Heart right ventricle (tissue), 16 donors: ENCODE measurements at regions of chr10 and their contacts with region 1.

Region 1: DNA sequence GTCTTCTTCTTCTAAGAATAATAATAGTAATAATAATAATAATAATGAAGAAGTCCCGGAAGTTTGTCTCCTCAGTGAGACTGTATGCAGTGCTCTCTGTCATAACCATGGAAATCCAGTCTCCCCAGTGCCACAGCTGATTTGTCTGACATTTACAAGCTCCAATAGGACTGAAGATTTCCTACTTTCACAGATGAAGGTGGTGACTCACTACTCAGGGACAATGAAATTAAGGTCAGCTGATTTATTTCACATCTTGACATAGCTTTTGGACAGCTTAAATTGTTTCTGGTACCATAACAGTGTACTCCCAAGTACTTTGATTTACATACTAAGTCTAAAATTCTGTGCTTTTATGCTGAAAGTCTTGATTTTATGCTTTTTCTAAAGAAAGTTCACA is 6.9 kb downstream of the CELF2 start:
- DNase-seq: no peak
- ATAC-seq: peak in 6 of 8 donors; percentile 10 to 91 (median 52)
- H3K4me3 ChIP-seq: no peak overlapping the region
- H3K27ac ChIP-seq: peak overlapping the region in 2 of 10 donors; percentile 41 to 92
- H3K4me1 ChIP-seq: peaks cover 9 to 75% (median 54%) of the 10 kb centered on the region in 9 donors
- H3K27me3 ChIP-seq: peaks cover 0 to 26% (median 0%) of the 10 kb centered on the region in 7 donors
- CTCF ChIP-seq: no peak

Region 2: GRCh38 chr10:10584161-10584560 is 440.4 kb before region 1 on chr10:
- intact Hi-C with region 1: loop called in 1 of 10 experiments (anchors 5 kb)
- DNase-seq: no peak
- ATAC-seq: no peak
- H3K4me3 ChIP-seq: no peak overlapping the region
- H3K27ac ChIP-seq: no peak overlapping the region
- H3K4me1 ChIP-seq: peaks cover 0 to 20% (median 0%) of the 10 kb centered on the region in 9 donors
- H3K27me3 ChIP-seq: no peaks in the 10 kb centered on the region
- CTCF ChIP-seq: no peak

Region 3: DNA sequence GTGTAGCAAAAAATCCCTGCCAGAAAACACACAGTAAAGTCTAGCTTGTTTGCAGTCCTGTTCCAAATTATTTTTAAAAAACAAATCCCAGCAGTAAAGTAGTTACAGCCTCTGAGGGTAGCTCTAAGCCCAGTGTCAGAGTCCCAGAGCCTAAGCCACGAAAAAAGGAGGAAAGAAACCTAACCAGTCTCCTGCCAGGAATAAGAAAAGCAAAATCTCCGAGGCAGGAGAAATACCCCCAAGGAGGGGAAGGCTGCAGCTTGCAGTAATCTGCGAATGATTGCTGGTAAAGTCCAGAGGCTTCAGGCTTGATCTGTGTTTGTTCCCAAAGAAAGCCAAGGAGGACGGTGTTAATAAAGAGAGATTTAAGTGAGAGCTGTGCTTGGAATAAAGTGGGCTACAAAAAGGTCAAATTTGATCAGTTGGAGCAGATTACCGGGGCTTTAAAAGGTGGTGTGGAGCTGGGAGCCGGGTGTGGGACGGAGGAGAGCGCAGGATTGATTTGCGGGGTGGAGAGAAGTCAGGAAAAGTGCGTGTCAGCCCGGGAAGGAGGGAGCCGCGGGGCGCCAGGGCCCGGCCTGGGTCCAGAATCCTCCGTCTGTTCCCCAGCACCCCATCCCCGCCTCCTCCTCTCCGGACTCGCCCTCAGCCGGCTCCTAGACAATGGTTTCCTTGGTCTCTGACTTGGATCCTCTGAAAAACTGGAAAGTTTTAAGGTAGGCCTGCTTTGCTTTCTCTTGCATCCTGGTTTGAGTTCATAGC is 226.3 kb before region 1 on chr10:
- intact Hi-C with region 1: loop called in 3 of 10 experiments (anchors 5 kb)
- DNase-seq: peak in 1 of 2 donors; percentile 25
- ATAC-seq: peak; percentile 29 to 70 (median 68)
- H3K4me3 ChIP-seq: peak overlapping the region in 9 of 10 donors; percentile 15 to 48 (median 32)
- H3K27ac ChIP-seq: peak overlapping the region; percentile 69 to 93 (median 84)
- H3K4me1 ChIP-seq: peaks cover 0 to 69% (median 32%) of the 10 kb centered on the region in 9 donors
- H3K27me3 ChIP-seq: no peaks in the 10 kb centered on the region
- CTCF ChIP-seq: peak in 2 of 9 donors; percentile 11 to 21

Region 4: DNA sequence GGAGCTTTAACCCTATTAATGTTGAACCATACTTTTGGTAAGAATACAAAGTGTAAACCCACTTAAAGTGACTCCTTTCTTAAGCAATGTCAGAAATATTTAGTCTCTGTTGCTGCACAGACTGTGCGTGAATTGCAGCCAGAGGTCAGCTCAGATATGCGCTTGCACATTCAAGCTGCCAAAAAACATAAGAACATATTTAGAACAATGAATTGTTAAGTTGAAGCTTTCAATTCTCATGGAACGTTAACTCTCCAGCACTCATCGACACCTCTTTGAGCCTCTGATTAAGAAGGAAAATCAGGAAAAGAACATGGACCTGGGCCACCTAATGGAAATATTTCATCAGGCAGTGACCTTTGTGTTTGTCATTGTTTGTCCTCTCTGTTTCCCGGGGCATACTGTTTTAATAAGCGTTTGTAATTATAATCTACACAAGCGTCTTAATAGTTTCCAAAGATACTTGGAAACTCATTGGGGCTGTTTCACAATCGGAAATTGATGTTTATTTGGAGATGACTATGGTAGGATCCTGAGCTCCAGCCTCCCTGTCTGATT is 199.9 kb before region 1 on chr10:
- intact Hi-C with region 1: loop called in 2 of 10 experiments (anchors 10 kb)
- DNase-seq: peak; percentile 26 to 45
- ATAC-seq: peak; percentile 68 to 93 (median 86)
- H3K4me3 ChIP-seq: peak overlapping the region in 2 of 10 donors; percentile 2 to 25
- H3K27ac ChIP-seq: peak overlapping the region; percentile 44 to 87 (median 78)
- H3K4me1 ChIP-seq: peaks cover 7 to 55% (median 32%) of the 10 kb centered on the region in 9 donors
- H3K27me3 ChIP-seq: no peaks in the 10 kb centered on the region
- CTCF ChIP-seq: peak in 3 of 9 donors; percentile 33 to 43 (median 39)

Region 5: GRCh38 chr10:10930979-10931743 is 93.4 kb before region 1 on chr10:
- intact Hi-C with region 1: no loop called
- DNase-seq: no peak
- ATAC-seq: no peak
- H3K4me3 ChIP-seq: no peak overlapping the region
- H3K27ac ChIP-seq: no peak overlapping the region
- H3K4me1 ChIP-seq: no peaks in the 10 kb centered on the region
- H3K27me3 ChIP-seq: no peaks in the 10 kb centered on the region
- CTCF ChIP-seq: peak in 5 of 9 donors; percentile 9 to 43 (median 33)

Region 6: GRCh38 chr10:11270135-11270857 is 245.7 kb after region 1 on chr10:
- intact Hi-C with region 1: loop called in 3 of 10 experiments (anchors 10 kb)
- DNase-seq: peak; percentile 83 to 84
- ATAC-seq: peak; percentile 92 to 98 (median 96)
- H3K4me3 ChIP-seq: no peak overlapping the region
- H3K27ac ChIP-seq: peak overlapping the region in 6 of 10 donors; percentile 9 to 55 (median 39)
- H3K4me1 ChIP-seq: peaks cover 0 to 37% (median 23%) of the 10 kb centered on the region in 9 donors
- H3K27me3 ChIP-seq: no peaks in the 10 kb centered on the region
- CTCF ChIP-seq: peak; percentile 63 to 96 (median 90)